ENCODE measurements at regions of chr11 and their contacts with region 1.

Region 1: DNA sequence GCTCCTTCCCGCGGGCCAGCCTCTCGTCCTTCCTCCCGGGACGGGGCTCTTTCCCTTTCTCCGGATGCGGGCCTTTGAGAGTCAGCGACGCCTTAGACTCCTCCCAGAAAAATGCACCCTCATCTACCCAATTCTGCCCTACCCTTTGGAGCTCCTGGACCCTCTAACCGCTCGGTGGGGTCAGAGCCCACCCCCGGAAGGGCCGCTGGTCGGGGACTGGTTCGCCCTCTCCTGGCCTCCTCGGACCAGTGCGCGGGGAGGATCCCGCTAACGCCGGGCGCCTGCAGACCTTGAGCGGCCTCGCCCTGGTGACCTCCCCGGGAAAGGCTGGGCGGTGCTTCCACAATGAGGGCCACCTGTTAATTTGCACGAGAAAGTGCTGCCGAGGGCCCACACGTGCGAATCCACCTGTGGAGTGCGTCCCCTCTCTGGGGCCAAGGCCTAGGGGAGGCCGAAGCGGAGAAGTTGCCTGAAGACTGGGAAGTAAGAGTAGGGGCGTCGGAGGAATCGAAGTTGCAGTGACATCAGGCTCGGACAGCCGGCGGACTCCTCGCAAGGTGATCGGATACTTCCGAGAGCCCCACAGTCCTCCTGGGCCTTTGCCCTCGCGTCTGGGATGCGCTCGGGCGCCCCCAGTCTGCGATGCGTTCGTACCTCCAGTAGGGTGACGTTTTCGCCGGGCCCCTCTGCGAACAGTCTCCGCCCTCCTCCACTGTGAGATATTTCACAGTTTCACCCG is 61.5 kb downstream of the ENDOD1 start:
- DNase-seq: peak; percentile 95
- H3K4me3 Mint-ChIP-seq: peak overlapping the region; percentile 81
- H3K27ac Mint-ChIP-seq: peak overlapping the region; percentile 82
- H3K4me1 Mint-ChIP-seq: peaks cover 44% of the 10 kb centered on the region
- H3K27me3 Mint-ChIP-seq: no peaks in the 10 kb centered on the region
- CTCF ChIP-seq: peak; percentile 63

Region 2: GRCh38 chr11:94973099-94973968 is 177.8 kb before region 1 on chr11 and contains the starts of genes CWC15 and KDM4D:
- CTCF ChIA-PET with region 1: interaction called, 4 read pairs
- POLR2A ChIA-PET with region 1: interaction called, 11 read pairs
- intact Hi-C with region 1: loop called (anchors 1 kb)
- DNase-seq: peak; percentile 94
- H3K4me3 Mint-ChIP-seq: peak within 1 kb of the TSS; percentile 86
- H3K27ac Mint-ChIP-seq: peak within 1 kb of the TSS; percentile 96
- H3K4me1 Mint-ChIP-seq: peaks cover 24% of the 10 kb centered on the region
- H3K27me3 Mint-ChIP-seq: no peaks in the 10 kb centered on the region
- CTCF ChIP-seq: no peak
- total RNA-seq, gene CWC15: 59.6 and 61.9 TPM in 2 replicates
- total RNA-seq, gene KDM4D: 1.1 and 1.3 TPM in 2 replicates

Region 3: GRCh38 chr11:95089620-95090542 is 61.2 kb before region 1 on chr11 and contains the start of gene ENDOD1:
- CTCF ChIA-PET with region 1: interaction called, 11 read pairs
- POLR2A ChIA-PET with region 1: interaction called, 34 read pairs
- intact Hi-C with region 1: no loop called
- DNase-seq: peak; percentile 80
- H3K4me3 Mint-ChIP-seq: peak within 1 kb of the TSS; percentile 85
- H3K27ac Mint-ChIP-seq: peak within 1 kb of the TSS; percentile 64
- H3K4me1 Mint-ChIP-seq: peaks cover 36% of the 10 kb centered on the region
- H3K27me3 Mint-ChIP-seq: no peaks in the 10 kb centered on the region
- CTCF ChIP-seq: no peak
- total RNA-seq, gene ENDOD1: 10.8 and 11.4 TPM in 2 replicates

Region 4: GRCh38 chr11:95231127-95231880 is 80.2 kb after region 1 on chr11 and contains the start of gene SESN3:
- CTCF ChIA-PET with region 1: interaction called, 25 read pairs
- POLR2A ChIA-PET with region 1: interaction called, 25 read pairs
- intact Hi-C with region 1: no loop called
- DNase-seq: peak; percentile 97
- H3K4me3 Mint-ChIP-seq: no peak within 1 kb of the TSS
- H3K27ac Mint-ChIP-seq: peak within 1 kb of the TSS; percentile 23
- H3K4me1 Mint-ChIP-seq: peaks cover 19% of the 10 kb centered on the region
- H3K27me3 Mint-ChIP-seq: no peaks in the 10 kb centered on the region
- CTCF ChIP-seq: no peak
- total RNA-seq, gene SESN3: 3.0 and 6.3 TPM in 2 replicates

Region 5: DNA sequence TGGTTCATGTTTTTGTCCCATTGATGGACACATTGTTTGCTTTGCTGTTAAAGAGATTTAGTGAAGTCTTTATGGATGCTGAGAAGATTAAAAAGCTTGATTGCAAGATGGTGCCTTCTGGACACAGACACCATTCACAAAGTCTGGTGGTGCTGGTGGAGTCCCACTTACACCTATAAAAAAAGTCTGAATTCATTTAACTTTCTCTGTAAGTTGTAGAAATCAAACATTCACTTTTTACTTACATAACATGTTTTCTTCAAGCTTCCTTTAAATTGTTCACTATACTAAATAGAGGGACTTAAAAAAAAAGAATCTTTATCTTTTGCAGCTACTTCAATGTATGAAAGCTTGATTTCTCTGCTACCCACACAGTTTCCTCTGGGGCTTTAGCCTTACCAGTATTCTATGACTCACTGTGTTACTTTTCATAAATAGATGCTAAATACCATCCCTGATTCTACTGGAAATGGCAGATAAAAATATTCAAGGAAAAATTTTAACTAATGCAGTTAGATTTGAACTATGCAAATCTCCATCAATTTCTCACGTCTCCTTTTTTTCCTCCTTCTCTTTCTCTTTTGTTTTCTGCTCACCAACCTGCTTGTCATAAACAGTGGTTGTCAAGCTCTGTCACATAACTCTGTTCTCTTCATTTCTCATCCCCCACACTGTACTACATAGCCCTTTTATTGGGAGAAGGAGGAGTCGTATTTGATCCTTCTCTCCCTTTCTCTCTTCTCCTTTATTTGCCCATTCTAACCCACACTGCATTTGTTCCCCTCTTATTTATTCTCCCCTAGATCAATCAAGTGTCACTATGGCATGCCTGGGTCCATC is 548.7 kb after region 1 on chr11:
- CTCF ChIA-PET with region 1: interaction called, 367 read pairs
- POLR2A ChIA-PET with region 1: interaction called, 3 read pairs
- intact Hi-C with region 1: loop called (anchors 1 kb)
- DNase-seq: no peak
- H3K4me3 Mint-ChIP-seq: no peak overlapping the region
- H3K27ac Mint-ChIP-seq: no peak overlapping the region
- H3K4me1 Mint-ChIP-seq: peaks cover 13% of the 10 kb centered on the region
- H3K27me3 Mint-ChIP-seq: no peaks in the 10 kb centered on the region
- CTCF ChIP-seq: no peak

Region 6: GRCh38 chr11:95790123-95790932 is 639.2 kb after region 1 on chr11 and contains the start of gene CEP57:
- CTCF ChIA-PET with region 1: interaction called, 5 read pairs
- POLR2A ChIA-PET with region 1: interaction called, 16 read pairs
- intact Hi-C with region 1: no loop called
- DNase-seq: peak; percentile 99
- H3K4me3 Mint-ChIP-seq: peak within 1 kb of the TSS; percentile 97
- H3K27ac Mint-ChIP-seq: peak within 1 kb of the TSS; percentile 100
- H3K4me1 Mint-ChIP-seq: peaks cover 17% of the 10 kb centered on the region
- H3K27me3 Mint-ChIP-seq: no peaks in the 10 kb centered on the region
- CTCF ChIP-seq: no peak
- total RNA-seq, gene CEP57: 73.7 and 78.8 TPM in 2 replicates